Left lung (tissue), 14 donors: ENCODE measurements at regions of chr3 and their contacts with region 1.

Region 1: GRCh38 chr3:194682694-194683310 is 2.9 kb upstream of the FAM43A start:
- DNase-seq: peak; percentile 57 to 90 (median 78)
- ATAC-seq: peak; percentile 84
- H3K4me3 ChIP-seq: no peak overlapping the region
- H3K27ac ChIP-seq: no peak overlapping the region
- H3K4me1 ChIP-seq: peaks cover 23 to 38% of the 10 kb centered on the region in 2 donors
- H3K27me3 ChIP-seq: peaks cover 0 to 23% of the 10 kb centered on the region in 2 donors
- CTCF ChIP-seq: peak; percentile 79 to 80

Region 2: DNA sequence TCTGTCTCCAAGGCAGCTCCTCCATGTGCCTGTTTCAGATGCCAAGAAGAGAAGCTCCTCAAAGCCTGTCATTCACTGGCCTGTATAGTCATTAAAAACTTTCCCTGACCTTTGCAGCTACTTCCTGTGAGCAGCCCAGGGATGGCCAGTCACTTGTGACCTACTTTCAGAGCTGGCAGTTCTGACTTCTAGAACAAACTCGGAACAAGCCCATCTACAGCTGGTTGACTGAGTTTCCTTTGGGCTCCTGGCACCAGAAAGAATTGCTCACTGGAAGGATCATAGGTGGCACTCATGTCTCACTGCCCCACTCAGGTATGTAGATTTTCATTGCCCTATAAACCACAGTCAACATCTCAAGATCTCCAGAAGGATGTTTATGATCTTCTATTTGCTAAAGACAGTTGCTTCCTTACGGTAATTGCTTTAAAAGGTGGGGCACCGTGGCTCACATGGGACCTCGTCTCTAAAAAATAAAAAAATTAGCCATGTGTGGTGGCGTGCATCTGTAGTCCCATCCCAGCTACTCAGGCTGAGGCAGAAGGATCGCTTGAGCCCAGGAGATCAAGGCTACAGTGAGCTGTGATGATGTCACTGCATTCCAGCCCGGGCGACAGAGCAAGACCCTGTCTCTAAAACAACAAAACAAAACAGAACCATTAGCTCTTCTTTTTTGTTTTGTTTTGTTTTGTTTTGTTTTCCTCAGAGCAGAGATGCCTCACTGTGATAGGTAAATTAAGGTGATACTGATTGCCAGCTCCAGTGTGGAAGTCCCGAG is 184.8 kb before region 1 on chr3:
- intact Hi-C with region 1: no loop called
- DNase-seq: no peak
- ATAC-seq: peak; percentile 83
- H3K4me3 ChIP-seq: no peak overlapping the region
- H3K27ac ChIP-seq: peak overlapping the region in 1 of 2 donors; percentile 13
- H3K4me1 ChIP-seq: peaks cover 0 to 41% of the 10 kb centered on the region in 2 donors
- H3K27me3 ChIP-seq: no peaks in the 10 kb centered on the region
- CTCF ChIP-seq: no peak

Region 3: GRCh38 chr3:194592798-194593752 is 89.7 kb before region 1 on chr3:
- intact Hi-C with region 1: no loop called
- DNase-seq: peak in 1 of 4 donors; percentile 8
- ATAC-seq: peak; percentile 76
- H3K4me3 ChIP-seq: no peak overlapping the region
- H3K27ac ChIP-seq: no peak overlapping the region
- H3K4me1 ChIP-seq: peaks cover 0 to 15% of the 10 kb centered on the region in 2 donors
- H3K27me3 ChIP-seq: no peaks in the 10 kb centered on the region
- CTCF ChIP-seq: no peak

Region 4: DNA sequence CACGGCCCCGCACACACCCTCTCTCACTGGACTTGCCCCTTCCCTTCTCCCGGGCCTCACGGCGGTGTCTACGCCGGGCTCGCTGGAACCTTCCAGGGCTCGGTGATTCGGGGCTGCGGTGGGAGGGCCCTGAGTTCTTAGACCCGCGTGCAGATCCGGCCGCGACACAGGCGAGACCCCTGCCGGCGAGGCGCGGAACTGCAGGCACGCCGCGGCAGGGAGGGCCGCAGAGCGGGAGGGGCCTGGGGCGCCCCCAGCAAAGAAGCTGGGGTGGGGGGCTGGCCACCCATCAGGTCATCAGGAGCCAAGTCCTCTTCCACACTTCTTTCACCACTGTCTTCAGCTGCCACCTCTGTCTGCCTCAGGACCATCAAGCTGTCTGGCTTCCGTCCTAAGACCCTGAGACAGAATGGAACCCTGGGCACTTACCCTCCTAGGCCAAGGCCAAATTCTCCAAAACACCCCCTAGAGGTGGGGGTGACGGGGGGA is 423.7 kb after region 1 on chr3:
- intact Hi-C with region 1: loop called in 1 of 2 experiments (anchors 5 kb)
- DNase-seq: peak; percentile 59 to 94 (median 68)
- ATAC-seq: peak; percentile 90
- H3K4me3 ChIP-seq: no peak overlapping the region
- H3K27ac ChIP-seq: no peak overlapping the region
- H3K4me1 ChIP-seq: peaks cover 0 to 53% of the 10 kb centered on the region in 2 donors
- H3K27me3 ChIP-seq: no peaks in the 10 kb centered on the region
- CTCF ChIP-seq: peak; percentile 100

Region 5: GRCh38 chr3:195259475-195260279 is 576.9 kb after region 1 on chr3:
- intact Hi-C with region 1: loop called in 1 of 2 experiments (anchors 5 kb)
- DNase-seq: peak; percentile 91 to 96 (median 93)
- ATAC-seq: peak; percentile 95
- H3K4me3 ChIP-seq: peak overlapping the region; percentile 62 to 75
- H3K27ac ChIP-seq: peak overlapping the region; percentile 87 to 94
- H3K4me1 ChIP-seq: peaks cover 12 to 47% of the 10 kb centered on the region in 2 donors
- H3K27me3 ChIP-seq: no peaks in the 10 kb centered on the region
- CTCF ChIP-seq: peak; percentile 49 to 73

Region 6: GRCh38 chr3:195442573-195443390 is 760.0 kb after region 1 on chr3 and contains the start of gene ACAP2:
- intact Hi-C with region 1: no loop called
- DNase-seq: peak; percentile 99 to 100 (median 100)
- ATAC-seq: peak; percentile 98
- H3K4me3 ChIP-seq: peak within 1 kb of the TSS; percentile 98
- H3K27ac ChIP-seq: peak within 1 kb of the TSS; percentile 96 to 100
- H3K4me1 ChIP-seq: peaks cover 12 to 48% of the 10 kb centered on the region in 2 donors
- H3K27me3 ChIP-seq: no peaks in the 10 kb centered on the region
- CTCF ChIP-seq: no peak
- polyA plus RNA-seq, gene ACAP2: 47.6 to 55.3 (median 51.2) TPM